ENCODE measurements at regions of chr1 and their contacts with region 1.

Region 1: DNA sequence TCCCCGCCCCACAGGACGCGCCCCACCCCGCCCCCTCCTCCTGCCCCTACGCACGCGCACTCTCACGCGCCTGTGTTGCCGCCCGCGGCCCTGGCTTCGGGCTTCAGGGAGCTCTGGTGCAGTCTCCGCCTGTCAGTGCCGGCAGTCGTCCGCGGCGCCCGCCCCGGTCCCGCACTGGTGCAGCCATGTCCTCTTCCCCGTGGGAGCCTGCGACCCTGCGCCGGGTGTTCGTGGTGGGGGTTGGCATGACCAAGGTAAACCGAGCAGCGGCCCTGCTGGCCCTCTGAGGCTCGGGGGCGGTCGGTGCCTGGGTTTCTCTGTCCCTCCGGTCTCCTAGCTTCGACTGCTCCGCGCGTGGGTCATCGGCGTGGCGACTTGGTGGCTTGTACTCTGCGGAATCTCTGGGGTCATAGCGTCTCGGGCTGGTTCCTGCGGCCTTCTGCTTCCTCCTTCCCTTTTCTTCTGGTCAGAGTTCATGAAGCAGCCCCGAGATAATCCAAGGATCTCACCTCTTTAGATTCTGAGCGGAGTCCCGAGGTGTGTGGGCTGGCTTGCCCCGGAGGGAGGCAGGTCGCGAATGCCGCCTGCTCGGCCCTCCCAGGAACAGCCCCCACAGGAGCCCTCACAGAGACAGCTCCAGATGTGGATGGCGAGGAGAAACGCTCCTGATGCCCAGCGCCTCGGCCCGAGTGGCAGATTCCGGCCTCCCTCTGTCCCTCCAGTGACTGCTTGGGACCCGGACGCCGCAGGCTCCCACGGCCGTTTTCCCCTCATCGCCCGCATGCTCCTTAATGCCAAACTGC is at the start of gene SCP2:
- DNase-seq: peak; percentile 62
- ATAC-seq: peak; percentile 93
- H3K4me3 Mint-ChIP-seq: peak within 1 kb of the TSS; percentile 91
- H3K27ac Mint-ChIP-seq: peak within 1 kb of the TSS; percentile 57
- H3K4me1 Mint-ChIP-seq: peaks cover 21% of the 10 kb centered on the region
- H3K27me3 Mint-ChIP-seq: peaks cover 7% of the 10 kb centered on the region
- CTCF ChIP-seq: no peak
- total RNA-seq, gene SCP2: 67.2 and 72.2 TPM in 2 replicates

Region 2: DNA sequence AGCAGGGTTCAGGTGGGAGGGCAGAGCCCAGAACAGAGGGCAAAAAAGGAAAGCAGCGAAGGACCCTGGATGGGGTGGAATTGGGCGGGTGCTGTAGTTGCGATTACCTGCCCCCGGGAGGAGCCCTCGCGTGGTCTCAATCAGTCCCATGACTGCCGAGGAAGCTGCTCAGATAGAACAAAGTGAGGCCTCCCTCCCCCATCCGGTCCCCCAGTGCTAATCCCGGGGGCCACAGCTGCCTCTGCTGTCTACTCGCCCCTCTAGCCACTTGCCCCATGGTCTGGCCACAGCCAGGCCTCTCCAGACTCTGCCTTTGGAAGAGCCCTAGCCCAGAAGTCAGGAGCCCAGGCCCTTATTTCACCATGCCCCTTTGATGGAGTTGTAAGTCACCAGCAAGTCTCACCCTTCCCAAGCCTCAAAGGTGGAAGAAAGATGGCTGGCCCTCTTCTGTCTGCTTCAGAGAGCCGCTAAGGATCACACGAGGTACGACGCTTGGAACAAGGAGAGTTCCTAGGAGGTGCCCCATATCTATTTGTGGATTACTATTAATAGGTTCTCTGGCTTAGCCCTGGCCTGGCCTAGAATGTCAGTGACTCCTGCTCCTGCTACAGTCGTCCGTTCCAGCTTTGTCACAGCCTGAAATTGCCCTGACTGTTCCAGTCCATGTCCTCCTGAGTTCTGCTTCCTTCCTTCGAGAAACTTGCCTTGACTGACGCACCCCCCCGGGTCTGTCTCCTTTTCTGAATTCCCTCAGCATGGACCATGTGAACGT is 22.3 kb before region 1 on chr1:
- CTCF ChIA-PET with region 1: interaction called, 3 read pairs
- POLR2A ChIA-PET with region 1: interaction called, 10 read pairs
- intact Hi-C with region 1: no loop called
- DNase-seq: no peak
- ATAC-seq: peak; percentile 68
- H3K4me3 Mint-ChIP-seq: no peak overlapping the region
- H3K27ac Mint-ChIP-seq: no peak overlapping the region
- H3K4me1 Mint-ChIP-seq: no peaks in the 10 kb centered on the region
- H3K27me3 Mint-ChIP-seq: no peaks in the 10 kb centered on the region
- CTCF ChIP-seq: no peak

Region 3: DNA sequence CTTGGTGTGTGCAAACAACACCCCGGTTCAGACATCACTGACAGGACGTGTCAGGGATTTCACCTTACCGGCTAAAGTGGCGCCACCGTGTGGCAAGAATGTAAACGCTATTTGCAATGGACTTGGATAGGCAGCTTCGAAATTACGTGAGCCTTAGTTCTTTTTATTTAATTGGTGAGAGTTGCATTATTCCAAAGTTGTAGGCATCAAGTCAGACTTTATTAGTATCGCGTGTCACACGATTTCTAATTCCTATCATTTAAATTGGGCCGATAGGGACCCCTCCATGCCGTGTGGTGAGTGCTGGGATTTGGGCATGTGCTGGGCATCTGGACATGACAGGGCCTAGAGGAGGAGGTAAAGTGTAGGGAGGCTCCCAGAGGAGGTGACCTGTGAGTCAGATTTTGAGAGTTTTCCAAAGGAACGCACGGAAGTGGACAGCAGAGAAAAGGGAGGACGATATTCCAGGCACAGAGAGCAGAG is 254.7 kb after region 1 on chr1:
- CTCF ChIA-PET with region 1: no interaction called
- POLR2A ChIA-PET with region 1: no interaction called
- intact Hi-C with region 1: loop called (anchors 5 kb)
- DNase-seq: peak; percentile 62
- ATAC-seq: peak; percentile 71
- H3K4me3 Mint-ChIP-seq: no peak overlapping the region
- H3K27ac Mint-ChIP-seq: no peak overlapping the region
- H3K4me1 Mint-ChIP-seq: no peaks in the 10 kb centered on the region
- H3K27me3 Mint-ChIP-seq: peaks cover 16% of the 10 kb centered on the region
- CTCF ChIP-seq: peak; percentile 57